ENCODE measurements at regions of chr3 and their contacts with region 1.

Region 1: DNA sequence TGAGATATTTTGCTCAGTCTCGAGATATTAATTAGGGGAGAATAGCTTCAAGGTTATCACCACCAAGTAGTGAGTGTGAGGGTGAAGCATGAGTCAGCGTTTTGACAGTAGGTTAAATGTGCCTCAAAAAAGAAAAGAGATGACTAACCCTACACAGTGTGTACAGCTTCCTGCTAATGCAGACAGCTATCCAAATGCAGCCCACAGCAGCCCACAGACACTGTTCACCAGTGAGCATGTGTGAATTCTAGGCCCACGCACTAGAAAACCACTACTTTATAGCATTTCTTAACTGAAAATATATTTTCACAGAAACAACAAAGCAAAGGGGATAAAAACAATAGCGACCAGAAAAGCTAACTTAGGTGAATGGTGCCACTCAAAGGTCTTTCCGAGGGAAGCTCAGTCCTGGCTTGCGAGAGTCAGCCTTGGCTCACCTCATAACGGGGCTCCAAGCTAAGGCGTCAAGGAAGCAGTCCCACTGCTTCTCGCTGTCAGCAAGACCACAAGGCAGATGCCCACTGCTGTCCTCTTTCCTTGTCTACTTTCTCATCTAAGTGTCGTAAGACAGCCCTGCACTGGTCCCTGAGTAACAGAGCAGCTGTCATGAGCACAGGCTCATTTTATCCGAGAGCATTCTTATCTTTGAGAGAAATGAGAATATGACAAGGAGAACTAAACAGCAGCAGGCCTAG is 47.6 kb downstream of the TXNRD3 start:
- DNase-seq: no peak

Region 2: DNA sequence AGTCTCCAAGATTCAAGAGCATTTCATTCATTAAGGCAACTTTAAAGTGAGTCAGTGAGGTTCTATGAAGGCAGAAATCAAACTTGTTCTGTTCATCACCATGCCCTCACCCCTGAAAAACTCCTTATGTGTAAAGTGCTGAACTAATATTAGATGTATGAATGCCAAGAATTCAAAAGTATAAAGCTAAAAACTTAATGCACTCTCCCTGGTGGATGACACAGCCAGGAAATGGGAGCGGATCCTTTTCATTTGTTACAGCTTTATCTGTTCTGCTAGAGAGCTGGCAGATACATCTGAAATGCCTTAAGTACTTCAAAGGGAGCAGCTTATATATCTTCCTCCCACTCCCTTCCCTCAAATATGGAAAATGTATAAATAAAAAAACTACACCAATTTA is 39.3 kb after region 1 on chr3:
- intact Hi-C with region 1: loop called in 1 of 2 experiments (anchors 1 kb)
- DNase-seq: no peak

Measured in posterior vena cava (tissue), 2 donors.